Gastrocnemius medialis (tissue), 4 donors: ENCODE measurements at regions of chr2 and their contacts with region 1.

Region 1: DNA sequence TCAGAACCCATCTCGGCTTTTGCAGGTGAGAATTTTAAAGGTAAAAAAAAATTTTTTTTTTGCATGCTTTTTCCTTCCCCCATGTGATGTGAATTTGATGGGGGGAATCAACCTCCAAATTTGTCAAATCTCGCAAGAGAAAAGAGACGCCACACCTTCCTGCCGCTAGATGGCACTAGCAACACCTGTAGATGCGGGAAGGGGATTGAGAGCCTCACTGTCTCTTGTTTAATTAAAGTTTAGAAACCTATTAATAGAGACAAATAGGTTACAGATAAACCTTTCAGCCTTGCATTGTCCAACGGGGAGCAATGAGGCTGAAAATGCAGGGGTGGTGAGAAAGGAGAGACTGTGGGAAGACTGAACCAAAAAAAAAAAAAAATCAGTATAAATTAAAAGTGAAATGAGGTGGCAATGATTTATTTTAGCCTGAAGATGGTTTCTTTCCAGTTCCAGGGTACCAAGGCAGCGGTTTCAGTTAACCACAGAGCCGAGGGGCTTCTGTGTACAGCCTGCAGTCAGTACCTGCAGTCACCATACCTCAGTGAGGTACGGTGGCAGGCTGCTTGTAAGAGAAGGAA is 84.6 kb downstream of the NRP2 start:
- DNase-seq: peak in 1 of 2 donors; percentile 23
- ATAC-seq: no peak
- H3K4me3 ChIP-seq: no peak overlapping the region
- H3K27ac ChIP-seq: no peak overlapping the region
- H3K4me1 ChIP-seq: peaks cover 0 to 5% of the 10 kb centered on the region in 2 donors
- H3K27me3 ChIP-seq: peaks cover 5 to 20% (median 11%) of the 10 kb centered on the region in 3 donors
- CTCF ChIP-seq: peak; percentile 42 to 87 (median 58)
- POLR2A ChIP-seq: no peak

Region 2: DNA sequence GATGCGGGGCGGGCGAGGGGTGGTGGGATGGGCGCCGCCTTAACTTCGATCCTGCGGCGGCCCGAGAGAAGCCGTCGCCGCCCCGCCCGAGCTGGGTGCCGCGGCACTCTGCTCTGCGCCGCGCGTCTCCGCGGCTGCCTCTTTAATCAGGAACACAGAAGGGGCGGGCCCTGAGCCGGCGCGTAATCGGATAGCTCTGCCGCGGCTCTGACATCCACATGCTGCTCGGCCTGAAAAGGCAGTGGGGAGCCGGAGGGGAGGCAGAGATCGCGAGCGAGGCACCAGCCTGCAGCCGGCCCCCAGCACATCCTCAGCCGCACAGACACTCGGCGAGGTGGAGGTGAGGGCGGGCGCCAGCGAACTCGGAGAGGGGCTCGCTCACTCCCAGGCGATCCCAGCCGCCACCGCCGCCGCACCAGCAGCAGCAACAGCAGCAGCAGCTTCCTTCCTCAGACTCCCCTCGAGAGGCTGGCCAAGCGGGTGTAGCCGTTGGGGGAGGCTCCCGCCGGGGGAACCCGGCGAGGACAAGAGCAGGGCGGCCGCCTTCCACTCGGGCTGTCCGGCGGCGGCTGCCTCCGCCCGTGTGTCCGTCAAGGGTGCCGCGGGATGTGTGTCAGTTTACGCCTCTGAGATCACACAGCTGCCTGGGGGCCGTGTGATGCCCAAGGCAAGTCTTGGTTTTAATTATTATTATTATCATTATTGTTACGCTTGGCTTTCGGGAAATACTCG is 84.5 kb before region 1 on chr2 and contains the start of gene NRP2:
- in situ Hi-C with region 1: no loop called
- intact Hi-C with region 1: no loop called
- DNase-seq: peak; percentile 41 to 58
- ATAC-seq: peak; percentile 34 to 61
- H3K4me3 ChIP-seq: peak within 1 kb of the TSS; percentile 52 to 71 (median 62)
- H3K27ac ChIP-seq: peak within 1 kb of the TSS; percentile 54 to 73 (median 63)
- H3K4me1 ChIP-seq: peaks cover 13 to 24% of the 10 kb centered on the region in 2 donors
- H3K27me3 ChIP-seq: peaks cover 27 to 67% (median 52%) of the 10 kb centered on the region in 3 donors
- CTCF ChIP-seq: peak in 1 of 5 experiments; percentile 4
- POLR2A ChIP-seq: peak; percentile 53 to 81
- total RNA-seq, gene NRP2: 1.6 to 4.1 (median 2.2) TPM

Region 3: GRCh38 chr2:205848601-205849000 is 81.7 kb after region 1 on chr2:
- in situ Hi-C with region 1: no loop called
- intact Hi-C with region 1: no loop called
- DNase-seq: no peak
- ATAC-seq: no peak
- H3K4me3 ChIP-seq: no peak overlapping the region
- H3K27ac ChIP-seq: no peak overlapping the region
- H3K4me1 ChIP-seq: peaks cover 0 to 15% of the 10 kb centered on the region in 2 donors
- H3K27me3 ChIP-seq: no peaks in the 10 kb centered on the region
- CTCF ChIP-seq: no peak
- POLR2A ChIP-seq: no peak

Region 4: GRCh38 chr2:205885492-205886099 is 118.7 kb after region 1 on chr2:
- in situ Hi-C with region 1: loop called in 2 of 4 experiments (anchors 5 to 10 kb)
- intact Hi-C with region 1: loop called (anchors 2 kb)
- DNase-seq: peak; percentile 26 to 57
- ATAC-seq: peak; percentile 56 to 73
- H3K4me3 ChIP-seq: no peak overlapping the region
- H3K27ac ChIP-seq: no peak overlapping the region
- H3K4me1 ChIP-seq: no peaks in the 10 kb centered on the region
- H3K27me3 ChIP-seq: no peaks in the 10 kb centered on the region
- CTCF ChIP-seq: peak; percentile 71 to 83 (median 75)
- POLR2A ChIP-seq: no peak

Region 5: DNA sequence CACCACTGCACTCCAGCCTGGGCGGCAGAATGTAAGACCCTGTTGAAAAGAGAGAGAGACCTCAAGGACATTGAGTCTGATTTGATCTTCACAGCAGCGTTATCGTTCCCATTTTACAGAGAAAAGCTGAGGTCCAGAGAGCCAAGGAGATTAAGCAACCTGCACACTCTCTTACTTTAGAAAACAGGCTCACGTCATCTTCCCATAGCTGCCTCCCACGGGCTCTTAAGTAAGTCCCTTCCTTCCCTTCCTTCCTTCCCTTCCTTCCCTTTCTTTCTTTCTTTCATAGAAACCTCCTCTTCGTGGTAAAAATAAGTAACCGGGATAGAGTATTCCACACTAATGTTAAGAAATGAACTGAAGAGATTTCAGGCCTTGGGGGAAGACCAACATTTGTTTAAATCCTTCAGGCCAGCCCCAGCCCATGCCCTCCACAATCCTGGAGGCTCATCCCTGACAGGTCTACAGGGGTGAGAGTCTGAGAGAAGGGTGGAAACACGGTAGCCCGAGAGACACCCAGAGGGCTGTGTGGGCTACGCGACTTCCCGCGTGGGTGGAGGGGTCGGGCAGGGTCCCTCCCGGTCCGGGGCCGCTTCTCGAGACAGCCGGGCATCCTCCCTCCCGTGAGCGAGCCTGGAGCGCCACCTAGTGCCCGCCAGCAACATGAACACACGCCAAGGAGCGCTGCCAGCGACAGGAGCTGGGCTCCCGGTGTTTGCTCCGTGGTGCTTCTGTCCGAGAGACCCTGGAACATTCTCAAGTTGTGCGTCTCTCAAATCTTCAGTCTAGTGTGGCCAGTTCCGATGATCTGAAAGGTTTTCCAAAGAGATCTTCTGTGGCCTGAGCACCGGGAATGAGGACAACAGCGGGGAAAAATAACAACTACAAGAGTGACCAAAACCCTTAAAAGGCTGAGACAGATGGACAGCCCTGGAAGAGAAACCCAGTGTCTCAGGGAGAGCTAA is 158.8 kb after region 1 on chr2:
- in situ Hi-C with region 1: no loop called
- intact Hi-C with region 1: loop called (anchors 5 kb)
- DNase-seq: peak; percentile 26 to 28
- ATAC-seq: peak; percentile 47 to 65
- H3K4me3 ChIP-seq: peak overlapping the region in 3 of 4 donors; percentile 8 to 24 (median 18)
- H3K27ac ChIP-seq: no peak overlapping the region
- H3K4me1 ChIP-seq: no peaks in the 10 kb centered on the region
- H3K27me3 ChIP-seq: peaks cover 9 to 14% (median 12%) of the 10 kb centered on the region in 3 donors
- CTCF ChIP-seq: peak; percentile 67 to 84 (median 77)
- POLR2A ChIP-seq: no peak

Region 6: GRCh38 chr2:205947621-205948495 is 181.0 kb after region 1 on chr2:
- in situ Hi-C with region 1: no loop called
- intact Hi-C with region 1: loop called (anchors 5 kb)
- DNase-seq: peak; percentile 11 to 50
- ATAC-seq: peak; percentile 91 to 92
- H3K4me3 ChIP-seq: peak overlapping the region in 1 of 4 donors; percentile 9
- H3K27ac ChIP-seq: peak overlapping the region in 1 of 4 donors; percentile 28
- H3K4me1 ChIP-seq: no peaks in the 10 kb centered on the region
- H3K27me3 ChIP-seq: no peaks in the 10 kb centered on the region
- CTCF ChIP-seq: peak; percentile 48 to 91 (median 70)
- POLR2A ChIP-seq: no peak